Activated CD4-positive, alpha-beta T cell treated with anti-CD3 and anti-CD28 coated beads for 36 hours (primary cell): ENCODE measurements at regions of chr19 and their contacts with region 1.

Region 1: GRCh38 chr19:43265664-43266025 is 3.7 kb downstream of the PSG9 start:
- DNase-seq: no peak
- ATAC-seq: no peak
- H3K4me3 Mint-ChIP-seq: no peak overlapping the region
- H3K27ac Mint-ChIP-seq: no peak overlapping the region
- H3K4me1 Mint-ChIP-seq: no peaks in the 10 kb centered on the region
- H3K27me3 Mint-ChIP-seq: peaks cover 6% of the 10 kb centered on the region

Region 2: GRCh38 chr19:43148233-43148632 is 117.4 kb before region 1 on chr19:
- CTCF ChIA-PET with region 1: no interaction called
- POLR2A ChIA-PET with region 1: no interaction called
- intact Hi-C with region 1: no loop called
- DNase-seq: no peak
- ATAC-seq: no peak
- H3K4me3 Mint-ChIP-seq: no peak overlapping the region
- H3K27ac Mint-ChIP-seq: no peak overlapping the region
- H3K4me1 Mint-ChIP-seq: no peaks in the 10 kb centered on the region
- H3K27me3 Mint-ChIP-seq: peaks cover 2% of the 10 kb centered on the region

Region 3: GRCh38 chr19:43191191-43191590 is 74.5 kb before region 1 on chr19:
- CTCF ChIA-PET with region 1: interaction called, 3 read pairs
- POLR2A ChIA-PET with region 1: no interaction called
- intact Hi-C with region 1: loop called (anchors 1 to 5 kb)
- DNase-seq: no peak
- ATAC-seq: no peak
- H3K4me3 Mint-ChIP-seq: no peak overlapping the region
- H3K27ac Mint-ChIP-seq: no peak overlapping the region
- H3K4me1 Mint-ChIP-seq: no peaks in the 10 kb centered on the region
- H3K27me3 Mint-ChIP-seq: peaks cover 37% of the 10 kb centered on the region

Region 4: DNA sequence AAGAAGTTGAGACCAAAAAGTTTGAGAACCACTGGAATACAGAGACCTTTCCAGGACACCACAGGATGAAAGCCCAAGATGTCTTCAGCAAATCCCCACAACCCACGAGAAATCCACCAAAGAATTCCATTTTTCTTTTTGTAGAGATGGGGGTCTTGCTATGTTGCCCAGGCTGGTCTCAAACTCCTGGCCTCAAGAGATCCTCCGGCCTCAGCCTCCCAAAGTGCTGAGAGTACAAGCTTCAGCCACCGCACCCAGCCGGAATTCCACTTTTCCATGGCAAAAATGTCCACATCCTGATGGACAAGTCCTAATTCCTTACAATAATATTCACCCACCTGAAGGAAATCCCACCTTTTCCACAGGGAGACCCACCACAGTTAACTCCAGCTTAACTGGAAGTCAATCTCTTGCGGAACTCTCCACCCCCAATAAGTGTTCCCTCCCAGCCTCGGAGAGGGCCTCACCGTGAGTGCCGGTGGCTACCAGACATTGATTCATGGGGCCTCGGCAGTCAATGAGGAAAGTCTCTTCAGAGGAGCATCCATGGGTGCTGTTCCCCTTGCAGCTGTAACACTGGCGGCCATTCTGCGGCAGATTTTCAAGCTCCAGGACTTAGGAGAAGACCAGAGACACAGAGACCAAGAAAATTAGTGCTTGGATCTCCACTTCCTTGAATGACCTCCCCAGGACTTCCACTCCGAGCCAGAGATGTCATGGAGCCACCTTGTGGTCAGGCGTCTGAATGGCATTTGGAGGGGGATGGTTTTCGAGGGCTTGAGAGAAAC is 386.3 kb after region 1 on chr19:
- CTCF ChIA-PET with region 1: no interaction called
- POLR2A ChIA-PET with region 1: no interaction called
- intact Hi-C with region 1: no loop called
- DNase-seq: peak; percentile 66
- ATAC-seq: no peak
- H3K4me3 Mint-ChIP-seq: no peak overlapping the region
- H3K27ac Mint-ChIP-seq: no peak overlapping the region
- H3K4me1 Mint-ChIP-seq: no peaks in the 10 kb centered on the region
- H3K27me3 Mint-ChIP-seq: no peaks in the 10 kb centered on the region

Region 5: DNA sequence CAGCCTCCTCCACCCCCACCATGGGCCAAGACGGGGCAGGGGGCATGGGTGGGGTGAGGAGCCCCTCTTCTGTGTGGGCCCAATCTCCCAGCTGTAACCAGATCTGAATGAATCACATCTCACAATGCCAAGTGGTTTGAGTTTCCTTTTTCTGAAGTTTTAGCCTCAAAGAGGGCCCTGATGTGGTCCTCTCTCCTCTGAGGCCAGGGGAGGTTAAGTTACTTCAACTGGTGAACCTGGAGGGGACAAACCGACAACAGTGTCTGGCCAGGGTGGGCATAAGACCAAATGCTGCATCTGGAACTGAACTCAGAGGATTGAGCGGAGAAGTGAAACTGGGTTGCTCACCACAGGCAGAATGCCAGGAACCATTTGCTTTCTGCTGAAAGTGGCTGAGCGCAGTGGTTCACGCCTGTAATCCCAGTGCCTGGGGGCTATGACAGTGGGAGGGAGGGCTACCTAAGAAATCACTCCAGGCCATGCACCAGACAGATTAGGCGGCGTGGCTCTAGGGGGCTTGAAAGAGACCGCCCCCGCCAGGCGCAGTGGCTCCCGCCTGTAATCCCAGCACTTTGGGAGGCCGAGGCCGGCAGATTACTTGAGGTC is 434.9 kb after region 1 on chr19:
- CTCF ChIA-PET with region 1: no interaction called
- POLR2A ChIA-PET with region 1: no interaction called
- intact Hi-C with region 1: no loop called
- DNase-seq: peak; percentile 47
- ATAC-seq: peak; percentile 26
- H3K4me3 Mint-ChIP-seq: peak overlapping the region; percentile 69
- H3K27ac Mint-ChIP-seq: peak overlapping the region; percentile 99
- H3K4me1 Mint-ChIP-seq: peaks cover 21% of the 10 kb centered on the region
- H3K27me3 Mint-ChIP-seq: peaks cover 18% of the 10 kb centered on the region